ENCODE measurements at regions of chr19 and their contacts with region 1.

Region 1: DNA sequence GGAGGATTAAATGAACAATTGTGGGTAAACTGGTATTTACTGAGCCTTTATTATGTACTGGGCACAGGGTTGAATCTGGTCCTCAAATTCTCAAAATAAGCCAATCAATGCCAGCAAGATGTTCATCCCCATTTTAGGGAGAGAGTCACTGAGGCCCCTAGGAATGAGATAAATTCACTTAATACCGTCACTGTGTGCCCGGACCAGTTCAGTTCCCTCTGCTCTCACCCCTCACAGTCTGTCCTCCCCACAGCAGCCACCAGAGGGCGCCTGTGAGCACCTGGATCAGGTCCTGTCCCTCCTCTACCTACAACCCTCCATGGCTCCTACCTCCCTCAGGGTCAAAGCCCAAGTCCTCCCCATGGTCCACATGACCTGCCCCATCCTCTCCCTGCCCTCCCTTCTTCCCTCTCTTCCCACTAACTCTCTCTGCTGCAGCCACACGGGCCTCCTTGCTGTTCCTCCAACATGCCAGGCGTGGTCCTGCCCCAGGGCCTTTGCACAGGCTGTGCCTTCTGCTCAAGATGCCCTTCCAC is 42.0 kb upstream of the NFIC start:
- DNase-seq: peak; percentile 84
- H3K4me3 Mint-ChIP-seq: no peak overlapping the region
- H3K27ac Mint-ChIP-seq: no peak overlapping the region
- H3K4me1 Mint-ChIP-seq: peaks cover 2% of the 10 kb centered on the region
- H3K27me3 Mint-ChIP-seq: peaks cover 14% of the 10 kb centered on the region

Region 2: GRCh38 chr19:3243819-3244700 is 80.3 kb before region 1 on chr19:
- CTCF ChIA-PET with region 1: no interaction called
- POLR2A ChIA-PET with region 1: no interaction called
- intact Hi-C with region 1: no loop called
- DNase-seq: peak; percentile 64
- H3K4me3 Mint-ChIP-seq: no peak overlapping the region
- H3K27ac Mint-ChIP-seq: no peak overlapping the region
- H3K4me1 Mint-ChIP-seq: no peaks in the 10 kb centered on the region
- H3K27me3 Mint-ChIP-seq: no peaks in the 10 kb centered on the region

Region 3: DNA sequence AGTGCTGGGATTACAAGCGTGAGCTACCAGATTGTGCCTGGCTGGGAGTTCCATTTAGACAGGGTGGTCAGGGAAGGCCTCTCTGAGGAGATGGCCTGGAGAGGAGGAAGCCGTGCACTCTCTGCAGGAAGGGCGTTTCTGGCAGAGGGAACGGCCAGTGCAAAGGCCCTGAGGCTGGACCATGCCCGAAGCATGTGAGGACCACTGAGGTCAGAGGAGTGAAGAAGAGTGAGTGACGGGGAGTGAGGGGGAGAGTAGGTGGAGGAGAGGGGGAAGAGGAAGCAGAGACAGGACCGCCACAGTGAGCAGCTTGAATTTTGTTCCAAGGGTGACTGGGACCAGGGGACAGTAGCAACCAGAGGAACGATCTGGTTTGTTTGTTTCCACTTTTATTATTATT is 67.3 kb before region 1 on chr19:
- CTCF ChIA-PET with region 1: no interaction called
- POLR2A ChIA-PET with region 1: no interaction called
- intact Hi-C with region 1: no loop called
- DNase-seq: no peak
- H3K4me3 Mint-ChIP-seq: no peak overlapping the region
- H3K27ac Mint-ChIP-seq: no peak overlapping the region
- H3K4me1 Mint-ChIP-seq: no peaks in the 10 kb centered on the region
- H3K27me3 Mint-ChIP-seq: peaks cover 7% of the 10 kb centered on the region

Region 4: GRCh38 chr19:3429581-3430080 is 105.2 kb after region 1 on chr19:
- CTCF ChIA-PET with region 1: interaction called, 88 read pairs
- POLR2A ChIA-PET with region 1: no interaction called
- intact Hi-C with region 1: loop called (anchors 1 kb)
- DNase-seq: peak; percentile 85
- H3K4me3 Mint-ChIP-seq: no peak overlapping the region
- H3K27ac Mint-ChIP-seq: no peak overlapping the region
- H3K4me1 Mint-ChIP-seq: peaks cover 7% of the 10 kb centered on the region
- H3K27me3 Mint-ChIP-seq: no peaks in the 10 kb centered on the region

Region 5: GRCh38 chr19:3434712-3435553 is 110.5 kb after region 1 on chr19:
- CTCF ChIA-PET with region 1: interaction called, 88 read pairs
- POLR2A ChIA-PET with region 1: no interaction called
- intact Hi-C with region 1: no loop called
- DNase-seq: peak; percentile 97
- H3K4me3 Mint-ChIP-seq: peak overlapping the region; percentile 96
- H3K27ac Mint-ChIP-seq: peak overlapping the region; percentile 98
- H3K4me1 Mint-ChIP-seq: peaks cover 16% of the 10 kb centered on the region
- H3K27me3 Mint-ChIP-seq: no peaks in the 10 kb centered on the region

Region 6: DNA sequence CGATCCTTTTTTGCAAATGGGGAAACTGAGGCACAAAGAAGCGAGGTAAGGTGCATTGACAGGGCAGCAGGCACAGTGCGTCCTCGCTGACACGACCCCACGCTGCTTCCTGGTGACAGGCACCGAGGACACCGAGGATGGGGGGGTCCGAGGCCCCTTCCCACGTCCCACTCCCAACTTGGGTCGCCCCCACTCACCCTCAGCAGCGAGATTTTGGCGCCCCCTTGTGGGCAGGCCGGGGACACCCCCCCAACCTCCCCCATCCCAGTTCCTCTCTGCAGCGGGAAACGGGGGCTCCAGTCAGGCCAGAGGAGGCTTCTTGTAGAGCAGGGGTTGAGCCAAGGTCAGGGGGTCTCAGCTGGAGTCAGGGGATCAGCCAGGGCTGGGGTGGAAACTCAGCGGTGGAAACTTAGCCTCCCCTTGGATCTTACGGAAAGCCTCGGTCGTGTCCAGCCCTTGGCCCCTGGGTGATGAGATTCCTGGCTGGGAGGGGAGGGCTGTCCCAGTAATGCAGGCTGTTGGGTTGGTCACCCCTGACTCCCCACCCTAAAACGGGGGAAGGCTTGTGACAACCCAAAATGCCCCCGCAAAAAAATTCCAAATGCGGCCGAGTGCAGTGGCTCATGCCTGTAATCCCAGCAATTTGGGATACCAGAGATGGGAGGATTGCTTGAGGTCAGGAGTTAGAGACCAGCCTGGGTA is 147.7 kb after region 1 on chr19:
- CTCF ChIA-PET with region 1: interaction called, 13 read pairs
- POLR2A ChIA-PET with region 1: no interaction called
- intact Hi-C with region 1: loop called (anchors 1 kb)
- DNase-seq: peak; percentile 57
- H3K4me3 Mint-ChIP-seq: no peak overlapping the region
- H3K27ac Mint-ChIP-seq: no peak overlapping the region
- H3K4me1 Mint-ChIP-seq: no peaks in the 10 kb centered on the region
- H3K27me3 Mint-ChIP-seq: no peaks in the 10 kb centered on the region

Region 7: GRCh38 chr19:3479177-3479833 is 154.9 kb after region 1 on chr19:
- CTCF ChIA-PET with region 1: interaction called, 31 read pairs
- POLR2A ChIA-PET with region 1: no interaction called
- intact Hi-C with region 1: no loop called
- DNase-seq: peak; percentile 60
- H3K4me3 Mint-ChIP-seq: no peak overlapping the region
- H3K27ac Mint-ChIP-seq: no peak overlapping the region
- H3K4me1 Mint-ChIP-seq: peaks cover 7% of the 10 kb centered on the region
- H3K27me3 Mint-ChIP-seq: peaks cover 2% of the 10 kb centered on the region

Region 8: GRCh38 chr19:3494051-3494450 is 169.7 kb after region 1 on chr19:
- CTCF ChIA-PET with region 1: interaction called, 3 read pairs
- POLR2A ChIA-PET with region 1: no interaction called
- intact Hi-C with region 1: loop called (anchors 5 kb)
- DNase-seq: peak; percentile 68
- H3K4me3 Mint-ChIP-seq: peak overlapping the region; percentile 32
- H3K27ac Mint-ChIP-seq: peak overlapping the region; percentile 77
- H3K4me1 Mint-ChIP-seq: peaks cover 11% of the 10 kb centered on the region
- H3K27me3 Mint-ChIP-seq: no peaks in the 10 kb centered on the region

Region 9: DNA sequence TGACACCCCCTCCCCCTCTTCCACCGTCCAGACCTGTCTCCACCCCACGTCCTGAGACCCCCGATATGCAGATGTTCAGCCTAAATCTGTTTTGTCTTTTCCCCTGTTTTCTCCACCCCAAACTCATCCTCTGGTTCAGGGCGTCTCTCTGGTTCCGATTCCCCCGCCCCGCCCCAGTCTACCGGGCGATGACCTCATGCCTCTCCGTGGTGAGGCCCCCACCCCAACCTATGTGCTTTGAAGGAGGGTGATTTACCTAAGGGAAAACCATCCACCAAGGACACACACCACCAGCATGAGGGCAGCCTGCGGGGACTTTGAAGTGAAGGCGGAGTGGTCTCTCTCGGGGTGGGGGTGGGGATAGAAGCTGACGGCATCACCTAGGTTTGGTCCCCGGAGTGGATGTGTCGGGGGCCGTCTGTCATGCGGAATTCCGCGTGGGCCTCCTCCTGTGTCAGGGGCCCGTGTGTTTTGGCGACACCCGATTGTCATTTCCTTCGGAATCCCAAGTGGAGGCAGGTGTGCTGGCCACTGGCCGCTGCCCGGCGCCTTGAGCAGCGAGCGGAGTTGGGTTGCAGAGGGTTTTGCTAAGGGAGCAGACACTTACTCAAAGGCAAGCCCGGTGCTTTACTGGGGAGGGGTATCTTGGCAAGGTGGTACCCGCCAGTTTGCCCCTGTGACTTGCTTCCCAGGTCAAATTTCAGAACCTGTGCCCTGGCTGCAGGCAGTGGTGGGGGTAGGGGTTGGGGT is 183.2 kb after region 1 on chr19:
- CTCF ChIA-PET with region 1: no interaction called
- POLR2A ChIA-PET with region 1: no interaction called
- intact Hi-C with region 1: no loop called
- DNase-seq: peak; percentile 67
- H3K4me3 Mint-ChIP-seq: peak overlapping the region; percentile 93
- H3K27ac Mint-ChIP-seq: peak overlapping the region; percentile 77
- H3K4me1 Mint-ChIP-seq: peaks cover 46% of the 10 kb centered on the region
- H3K27me3 Mint-ChIP-seq: no peaks in the 10 kb centered on the region